ENCODE measurements at regions of chr5 and their contacts with region 1.

Region 1: DNA sequence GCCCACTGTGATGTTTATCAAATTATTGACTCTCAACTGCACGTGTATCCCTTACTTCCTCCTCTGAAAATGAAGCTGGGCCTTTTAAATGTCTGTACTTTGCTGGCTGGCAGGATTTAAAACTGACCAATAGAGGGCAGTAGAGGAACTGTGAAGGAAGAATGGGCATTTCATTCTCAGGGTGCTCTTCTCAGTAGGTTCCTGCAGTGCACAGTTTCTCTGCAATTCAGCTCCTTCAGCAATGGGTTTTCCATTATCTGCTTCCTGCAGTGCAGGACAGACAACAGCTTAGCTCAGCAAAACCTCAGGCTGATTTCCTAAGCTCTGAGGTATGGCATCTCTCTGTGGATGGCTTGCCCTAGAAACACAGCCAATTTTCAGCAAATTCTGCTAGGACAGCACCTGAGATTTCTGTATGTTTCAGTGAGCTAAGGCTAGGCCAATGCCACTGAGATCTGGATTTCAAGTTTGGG is 298.4 kb upstream of the PRDM9 start:
- DNase-seq: peak; percentile 13 to 51
- H3K4me3 ChIP-seq: no peak overlapping the region
- H3K27ac ChIP-seq: no peak overlapping the region
- H3K4me1 ChIP-seq: peaks cover 0 to 3% (median 0%) of the 10 kb centered on the region in 4 experiments; a peak in 3 of 7 replicates
- H3K27me3 ChIP-seq: no peaks in the 10 kb centered on the region
- CTCF ChIP-seq: peak in 2 of 3 experiments; percentile 75 to 91; a peak in 3 of 4 replicates
- EP300 ChIP-seq: no peak
- POLR2A ChIP-seq: no peak
- RAD21 ChIP-seq: peak; percentile 84 to 90

Region 2: DNA sequence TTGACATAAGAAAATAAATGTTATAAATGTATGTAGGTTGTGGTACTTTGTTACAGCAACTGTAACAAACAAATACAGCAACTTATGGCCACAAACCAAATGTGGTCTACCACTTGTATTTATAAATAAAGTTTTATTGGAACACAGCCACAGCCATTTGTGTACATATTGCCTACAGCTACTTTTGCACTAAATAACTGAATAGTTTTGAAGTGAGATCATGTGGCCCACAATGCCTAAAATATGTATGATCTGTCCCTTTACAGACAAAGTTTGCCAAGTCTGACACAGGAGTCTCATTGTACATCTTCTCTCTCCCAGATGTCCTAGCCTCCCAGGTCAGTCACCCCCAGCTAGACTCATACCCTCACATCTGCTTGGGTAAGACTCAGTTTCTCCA is 14.9 kb after region 1 on chr5:
- CTCF ChIA-PET with region 1: interaction called, 25 read pairs
- POLR2A ChIA-PET with region 1: no interaction called
- DNase-seq: no peak
- H3K4me3 ChIP-seq: no peak overlapping the region
- H3K27ac ChIP-seq: no peak overlapping the region
- H3K4me1 ChIP-seq: no peaks in the 10 kb centered on the region
- H3K27me3 ChIP-seq: no peaks in the 10 kb centered on the region
- CTCF ChIP-seq: no peak
- EP300 ChIP-seq: no peak
- POLR2A ChIP-seq: no peak
- RAD21 ChIP-seq: no peak

Region 3: GRCh38 chr5:23507278-23507685 is 298.3 kb after region 1 on chr5 and contains the start of gene PRDM9:
- CTCF ChIA-PET with region 1: interaction called, 10 read pairs
- POLR2A ChIA-PET with region 1: no interaction called
- DNase-seq: peak; percentile 10 to 55
- H3K4me3 ChIP-seq: peak within 1 kb of the TSS in 1 of 4 experiments; percentile 57; a peak in 2 of 8 replicates
- H3K27ac ChIP-seq: no peak within 1 kb of the TSS
- H3K4me1 ChIP-seq: peaks cover 0 to 7% (median 0%) of the 10 kb centered on the region in 4 experiments; a peak in 1 of 7 replicates
- H3K27me3 ChIP-seq: no peaks in the 10 kb centered on the region
- CTCF ChIP-seq: no peak
- EP300 ChIP-seq: no peak
- POLR2A ChIP-seq: no peak
- RAD21 ChIP-seq: no peak
- total RNA-seq, gene PRDM9: not detected in 2 replicates